ENCODE measurements at regions of chr3 and their contacts with region 1.

Region 1: DNA sequence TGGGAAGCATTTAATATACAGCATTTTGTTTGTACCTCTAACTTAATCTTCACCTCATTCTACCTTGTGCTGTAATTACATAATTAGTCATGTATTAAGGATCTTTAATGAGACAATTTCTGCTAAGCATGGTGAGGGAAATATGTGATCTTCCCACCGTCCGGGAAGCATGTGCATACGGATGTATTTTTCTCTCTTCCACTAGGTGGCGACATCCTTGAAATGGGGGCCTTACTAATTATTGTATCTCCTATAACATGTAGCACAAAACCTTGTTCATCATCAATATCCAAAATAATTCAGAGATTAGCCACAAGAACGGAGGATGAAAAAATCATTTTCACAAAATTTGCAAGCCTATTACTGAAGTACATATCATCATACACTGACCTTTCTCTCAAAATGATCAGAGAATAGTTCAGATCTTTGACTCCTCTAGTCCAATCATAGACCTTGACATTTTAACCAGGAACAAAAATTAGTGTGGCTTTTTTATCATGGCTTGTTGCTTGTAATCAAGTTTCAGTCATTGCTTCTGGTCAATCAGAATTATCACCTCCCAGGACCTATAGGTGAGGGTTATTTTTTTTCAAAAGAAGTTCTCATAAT is 148.9 kb upstream of the GBE1 start:
- DNase-seq: peak; percentile 21
- ATAC-seq: peak; percentile 87
- H3K4me3 ChIP-seq: no peak overlapping the region
- H3K27ac ChIP-seq: no peak overlapping the region
- H3K4me1 ChIP-seq: no peaks in the 10 kb centered on the region
- H3K27me3 ChIP-seq: no peaks in the 10 kb centered on the region
- CTCF ChIP-seq: peak; percentile 58 to 71 (median 65)
- EP300 ChIP-seq: no peak
- POLR2A ChIP-seq: no peak
- RAD21 ChIP-seq: peak; percentile 41

Region 2: GRCh38 chr3:81823882-81824395 is 86.4 kb before region 1 on chr3:
- CTCF ChIA-PET with region 1: interaction called, 12 read pairs
- POLR2A ChIA-PET with region 1: no interaction called
- RAD21 ChIA-PET with region 1: no interaction called
- SMC1A ChIA-PET with region 1: no interaction called
- in situ Hi-C with region 1: no loop called
- intact Hi-C with region 1: no loop called
- DNase-seq: peak; percentile 59
- ATAC-seq: peak; percentile 99
- H3K4me3 ChIP-seq: no peak overlapping the region
- H3K27ac ChIP-seq: peak overlapping the region; percentile 53
- H3K4me1 ChIP-seq: peaks cover 10% of the 10 kb centered on the region; the same call in 1 of the 2 replicates
- H3K27me3 ChIP-seq: no peaks in the 10 kb centered on the region
- CTCF ChIP-seq: no peak
- EP300 ChIP-seq: 0 out of 4 replicates have a peak, but pooled peaks of 1 of the 2 experiments have one; percentile 29
- POLR2A ChIP-seq: no peak
- RAD21 ChIP-seq: no peak

Region 3: GRCh38 chr3:81898336-81898735 is 12.0 kb before region 1 on chr3:
- CTCF ChIA-PET with region 1: interaction called, 33 read pairs
- POLR2A ChIA-PET with region 1: no interaction called
- RAD21 ChIA-PET with region 1: interaction called, 5 read pairs
- SMC1A ChIA-PET with region 1: interaction called, 8 read pairs
- in situ Hi-C with region 1: no loop called
- intact Hi-C with region 1: no loop called
- DNase-seq: no peak
- ATAC-seq: no peak
- H3K4me3 ChIP-seq: no peak overlapping the region
- H3K27ac ChIP-seq: no peak overlapping the region
- H3K4me1 ChIP-seq: no peaks in the 10 kb centered on the region
- H3K27me3 ChIP-seq: no peaks in the 10 kb centered on the region
- CTCF ChIP-seq: no peak
- EP300 ChIP-seq: no peak
- POLR2A ChIP-seq: no peak
- RAD21 ChIP-seq: no peak

Region 4: GRCh38 chr3:81929699-81930098 is 19.4 kb after region 1 on chr3:
- CTCF ChIA-PET with region 1: interaction called, 57 read pairs
- POLR2A ChIA-PET with region 1: no interaction called
- RAD21 ChIA-PET with region 1: no interaction called
- SMC1A ChIA-PET with region 1: interaction called, 4 read pairs
- in situ Hi-C with region 1: no loop called
- intact Hi-C with region 1: no loop called
- DNase-seq: no peak
- ATAC-seq: no peak
- H3K4me3 ChIP-seq: no peak overlapping the region
- H3K27ac ChIP-seq: no peak overlapping the region
- H3K4me1 ChIP-seq: no peaks in the 10 kb centered on the region
- H3K27me3 ChIP-seq: no peaks in the 10 kb centered on the region
- CTCF ChIP-seq: no peak
- EP300 ChIP-seq: no peak
- POLR2A ChIP-seq: no peak
- RAD21 ChIP-seq: no peak

Region 5: GRCh38 chr3:81980596-81981494 is 70.5 kb after region 1 on chr3:
- CTCF ChIA-PET with region 1: no interaction called
- POLR2A ChIA-PET with region 1: no interaction called
- RAD21 ChIA-PET with region 1: no interaction called
- SMC1A ChIA-PET with region 1: no interaction called
- in situ Hi-C with region 1: no loop called
- intact Hi-C with region 1: no loop called
- DNase-seq: no peak
- ATAC-seq: peak; percentile 43
- H3K4me3 ChIP-seq: no peak overlapping the region
- H3K27ac ChIP-seq: no peak overlapping the region
- H3K4me1 ChIP-seq: no peaks in the 10 kb centered on the region
- H3K27me3 ChIP-seq: no peaks in the 10 kb centered on the region
- CTCF ChIP-seq: no peak
- EP300 ChIP-seq: no peak
- POLR2A ChIP-seq: no peak
- RAD21 ChIP-seq: no peak

Region 6: DNA sequence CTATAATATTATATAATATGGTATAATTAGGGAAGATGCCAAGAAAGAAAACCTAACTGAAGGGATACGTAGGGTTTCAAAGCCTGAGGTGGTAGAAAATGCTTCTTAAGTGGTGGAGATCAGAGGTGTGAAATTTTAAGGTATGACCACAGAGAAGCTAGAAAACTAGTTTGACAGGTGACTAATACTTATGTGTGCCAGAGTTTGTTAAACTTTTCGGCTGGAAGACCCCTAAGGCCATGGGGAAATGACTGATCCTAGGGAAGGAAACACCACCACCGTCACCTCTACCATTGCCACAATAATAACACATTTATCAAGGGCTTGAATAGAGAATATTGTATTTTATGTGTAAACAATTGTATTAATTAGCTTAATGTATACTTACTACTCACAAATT is 112.5 kb after region 1 on chr3:
- CTCF ChIA-PET with region 1: no interaction called
- POLR2A ChIA-PET with region 1: no interaction called
- RAD21 ChIA-PET with region 1: no interaction called
- SMC1A ChIA-PET with region 1: no interaction called
- in situ Hi-C with region 1: no loop called
- intact Hi-C with region 1: no loop called
- DNase-seq: no peak
- ATAC-seq: no peak
- H3K4me3 ChIP-seq: no peak overlapping the region
- H3K27ac ChIP-seq: no peak overlapping the region
- H3K4me1 ChIP-seq: no peaks in the 10 kb centered on the region
- H3K27me3 ChIP-seq: no peaks in the 10 kb centered on the region
- CTCF ChIP-seq: no peak
- EP300 ChIP-seq: no peak
- POLR2A ChIP-seq: no peak
- RAD21 ChIP-seq: no peak

Region 7: GRCh38 chr3:83460052-83460451 is 1549.7 kb after region 1 on chr3:
- CTCF ChIA-PET with region 1: no interaction called
- POLR2A ChIA-PET with region 1: no interaction called
- RAD21 ChIA-PET with region 1: no interaction called
- SMC1A ChIA-PET with region 1: no interaction called
- in situ Hi-C with region 1: no loop called
- intact Hi-C with region 1: no loop called
- DNase-seq: no peak
- ATAC-seq: no peak
- H3K4me3 ChIP-seq: no peak overlapping the region
- H3K27ac ChIP-seq: no peak overlapping the region
- H3K4me1 ChIP-seq: no peaks in the 10 kb centered on the region
- H3K27me3 ChIP-seq: no peaks in the 10 kb centered on the region
- CTCF ChIP-seq: no peak
- EP300 ChIP-seq: no peak
- POLR2A ChIP-seq: no peak
- RAD21 ChIP-seq: no peak